Psoas muscle (tissue), 8 donors: ENCODE measurements at regions of chr11 and their contacts with region 1.

Region 1: DNA sequence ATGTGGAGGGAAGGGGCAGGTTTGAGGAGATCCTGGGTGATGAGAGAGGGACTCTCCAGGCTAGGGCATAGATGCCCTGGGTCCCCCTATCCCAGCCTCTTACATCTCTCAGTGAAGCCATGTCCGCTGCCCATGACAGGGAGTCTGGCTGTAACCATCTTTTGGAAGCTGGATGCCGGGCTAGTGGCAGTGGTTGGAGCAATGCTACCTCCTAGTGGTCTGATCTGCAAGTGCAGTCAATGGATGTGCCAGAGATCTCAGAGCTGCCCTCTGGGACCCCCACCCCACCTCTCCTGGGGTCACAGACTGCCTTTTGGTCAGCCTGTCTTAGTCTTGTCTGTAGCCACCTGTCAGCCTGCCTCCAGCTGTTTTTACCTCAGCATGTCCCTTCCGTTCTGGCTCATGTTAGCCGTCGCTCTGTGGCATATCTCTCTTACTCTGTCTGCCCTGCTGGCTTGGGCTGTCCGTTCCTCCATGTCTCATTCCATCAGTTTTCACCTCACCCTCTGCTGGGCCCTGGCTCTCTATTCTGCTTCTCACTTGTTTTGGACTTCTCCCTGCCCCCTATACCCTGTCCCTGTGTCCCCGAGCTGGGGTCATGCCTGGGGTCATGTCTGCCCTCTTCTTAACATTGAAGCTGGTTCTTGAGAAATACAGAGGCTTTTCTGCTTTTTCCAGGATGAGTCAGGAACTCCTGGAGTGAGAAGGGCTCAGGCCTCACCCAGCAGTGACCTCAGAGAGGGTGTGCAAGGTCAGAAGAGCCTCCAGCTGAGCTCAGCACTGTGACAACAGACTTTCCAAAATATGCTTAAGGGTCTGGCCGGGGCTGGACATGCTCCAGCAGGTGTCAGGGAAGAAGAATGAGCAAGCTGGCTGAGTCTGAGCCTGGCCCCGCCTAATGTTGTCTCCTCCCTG is 52.0 kb upstream of the THY1 start:
- DNase-seq: peak; percentile 62 to 72
- ATAC-seq: peak; percentile 80 to 94 (median 90)
- H3K4me3 ChIP-seq: no peak overlapping the region
- H3K27ac ChIP-seq: no peak overlapping the region
- H3K4me1 ChIP-seq: no peaks in the 10 kb centered on the region
- H3K27me3 ChIP-seq: no peaks in the 10 kb centered on the region
- CTCF ChIP-seq: peak; percentile 86

Region 2: GRCh38 chr11:119168471-119169281 is 306.3 kb before region 1 on chr11 and contains the start of gene NLRX1:
- intact Hi-C with region 1: loop called in 1 of 2 experiments (anchors 10 kb)
- DNase-seq: peak; percentile 86 to 92
- ATAC-seq: peak; percentile 93 to 95 (median 94)
- H3K4me3 ChIP-seq: peak within 1 kb of the TSS; percentile 95
- H3K27ac ChIP-seq: peak within 1 kb of the TSS; percentile 96
- H3K4me1 ChIP-seq: peaks cover 4% of the 10 kb centered on the region
- H3K27me3 ChIP-seq: no peaks in the 10 kb centered on the region
- CTCF ChIP-seq: peak; percentile 82
- total RNA-seq, gene NLRX1: 18.1 to 28.7 (median 27.1) TPM

Region 3: DNA sequence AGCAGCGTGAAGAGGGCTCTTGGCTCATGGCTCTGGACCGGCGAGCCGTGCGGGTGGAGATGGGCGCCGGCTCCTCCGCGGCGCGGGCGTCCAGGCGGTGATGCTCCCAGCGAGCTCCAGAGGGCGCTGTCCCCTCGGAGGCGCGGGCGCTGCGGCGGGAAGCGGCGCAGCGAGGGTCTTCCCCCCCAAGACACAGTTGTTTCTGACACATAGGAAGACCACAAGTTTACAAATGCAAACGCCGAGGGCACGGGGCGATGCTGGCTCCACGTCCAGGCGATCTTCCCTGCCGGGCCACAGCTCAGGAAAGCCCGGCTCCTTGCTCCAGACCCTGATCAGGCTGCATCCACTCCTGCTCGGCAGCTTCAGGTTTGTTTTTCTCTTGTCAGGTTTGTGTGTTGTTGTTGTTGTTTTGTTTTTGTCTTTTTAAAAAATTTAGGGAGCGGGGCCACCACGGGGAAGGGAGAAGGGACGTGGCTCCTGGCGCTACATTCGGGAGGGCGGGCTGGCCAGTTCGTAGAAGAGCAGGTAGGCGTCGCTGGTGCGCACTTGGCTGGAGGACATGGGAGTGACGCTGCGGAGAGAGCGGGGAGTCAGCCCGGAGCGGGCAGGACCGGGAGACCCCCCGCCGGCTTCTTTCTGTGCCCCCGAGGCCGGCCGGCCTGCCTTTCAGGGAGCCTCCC is 118.4 kb before region 1 on chr11:
- intact Hi-C with region 1: loop called (anchors 1 to 10 kb)
- DNase-seq: peak; percentile 84 to 93
- ATAC-seq: peak; percentile 57 to 71 (median 62)
- H3K4me3 ChIP-seq: peak overlapping the region; percentile 61
- H3K27ac ChIP-seq: peak overlapping the region; percentile 74
- H3K4me1 ChIP-seq: peaks cover 31% of the 10 kb centered on the region
- H3K27me3 ChIP-seq: no peaks in the 10 kb centered on the region
- CTCF ChIP-seq: peak; percentile 79

Region 4: GRCh38 chr11:119368121-119369034 is 106.6 kb before region 1 on chr11:
- intact Hi-C with region 1: no loop called
- DNase-seq: peak; percentile 87 to 97
- ATAC-seq: peak; percentile 29 to 54 (median 52)
- H3K4me3 ChIP-seq: peak overlapping the region; percentile 11
- H3K27ac ChIP-seq: peak overlapping the region; percentile 97
- H3K4me1 ChIP-seq: peaks cover 86% of the 10 kb centered on the region
- H3K27me3 ChIP-seq: no peaks in the 10 kb centered on the region
- CTCF ChIP-seq: no peak

Region 5: GRCh38 chr11:119381181-119381988 is 93.6 kb before region 1 on chr11 and contains the start of gene USP2:
- intact Hi-C with region 1: loop called (anchors 2 to 10 kb)
- DNase-seq: peak; percentile 96 to 98
- ATAC-seq: peak; percentile 81 to 84 (median 83)
- H3K4me3 ChIP-seq: peak within 1 kb of the TSS; percentile 84
- H3K27ac ChIP-seq: peak within 1 kb of the TSS; percentile 97
- H3K4me1 ChIP-seq: peaks cover 35% of the 10 kb centered on the region
- H3K27me3 ChIP-seq: no peaks in the 10 kb centered on the region
- CTCF ChIP-seq: peak; percentile 91
- total RNA-seq, gene USP2: 75.8 to 210 (median 156) TPM

Region 6: DNA sequence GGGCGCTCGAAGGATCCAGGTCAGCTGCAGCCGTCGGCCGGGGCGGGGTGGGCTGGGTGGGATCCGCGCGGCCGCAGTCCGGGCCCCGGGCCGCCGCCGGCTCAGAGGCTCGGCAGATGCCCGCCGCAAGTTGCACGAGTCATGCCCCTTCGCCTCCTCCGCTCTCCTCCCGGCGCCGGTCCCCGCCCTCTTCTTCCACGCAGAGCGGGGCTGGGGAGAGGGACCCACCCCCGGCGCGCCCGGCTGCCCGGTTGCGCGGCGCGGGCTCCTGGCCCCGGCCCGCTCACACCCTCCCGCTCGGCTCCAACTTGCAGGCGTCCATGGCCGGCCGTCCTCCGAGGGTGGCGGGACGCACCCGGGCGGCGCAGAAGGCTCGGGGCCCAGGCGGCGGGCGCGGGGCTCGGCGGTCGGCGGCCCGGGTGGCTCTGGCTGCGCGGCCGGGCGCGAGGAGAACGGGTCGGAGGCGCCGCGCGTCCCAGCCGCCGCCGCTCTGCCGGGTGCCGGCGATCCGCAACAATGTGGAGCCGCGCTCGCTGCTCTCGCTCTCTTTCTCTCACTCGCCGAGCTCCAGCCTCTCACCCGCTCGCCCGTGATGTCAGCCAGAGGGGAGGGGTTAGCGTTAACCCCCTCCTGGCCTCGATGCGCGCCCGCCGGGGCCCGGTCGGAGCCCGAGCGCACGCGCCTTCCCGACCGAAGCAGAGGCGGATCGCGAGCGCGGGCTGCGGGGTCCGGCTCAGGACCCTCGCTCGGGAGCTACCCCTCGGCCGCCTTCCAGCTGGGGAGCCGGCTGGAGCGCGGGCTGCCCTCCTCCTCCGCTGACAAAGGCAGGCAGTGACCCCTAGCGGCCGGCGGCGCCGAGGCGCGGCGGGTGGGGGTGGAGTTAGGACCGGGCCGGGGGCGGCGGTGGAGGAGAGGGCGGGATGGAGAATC is 254.0 kb after region 1 on chr11 and contains the start of gene NECTIN1:
- intact Hi-C with region 1: loop called (anchors 2 to 10 kb)
- DNase-seq: peak; percentile 89 to 91
- ATAC-seq: peak; percentile 92 to 96 (median 94)
- H3K4me3 ChIP-seq: peak within 1 kb of the TSS; percentile 86
- H3K27ac ChIP-seq: peak within 1 kb of the TSS; percentile 63
- H3K4me1 ChIP-seq: peaks cover 13% of the 10 kb centered on the region
- H3K27me3 ChIP-seq: peaks cover 0 to 29% (median 4%) of the 10 kb centered on the region in 3 donors
- CTCF ChIP-seq: peak; percentile 92
- total RNA-seq, gene NECTIN1: 1.6 to 2.2 (median 1.8) TPM